Naive thymus-derived CD4-positive, alpha-beta T cell (primary cell): ENCODE measurements at regions of chr6 and their contacts with region 1.

Region 1: GRCh38 chr6:51511081-51511480 is 576.3 kb downstream of the PKHD1 start:
- DNase-seq: no peak
- ATAC-seq: no peak
- H3K4me3 ChIP-seq: no peak overlapping the region
- H3K4me3 Mint-ChIP-seq: no peak overlapping the region
- H3K27ac ChIP-seq: no peak overlapping the region
- H3K27ac Mint-ChIP-seq: no peak overlapping the region
- H3K4me1 ChIP-seq: no peaks in the 10 kb centered on the region
- H3K4me1 Mint-ChIP-seq: no peaks in the 10 kb centered on the region
- H3K27me3 ChIP-seq: no peaks in the 10 kb centered on the region
- H3K27me3 Mint-ChIP-seq: no peaks in the 10 kb centered on the region

Region 2: DNA sequence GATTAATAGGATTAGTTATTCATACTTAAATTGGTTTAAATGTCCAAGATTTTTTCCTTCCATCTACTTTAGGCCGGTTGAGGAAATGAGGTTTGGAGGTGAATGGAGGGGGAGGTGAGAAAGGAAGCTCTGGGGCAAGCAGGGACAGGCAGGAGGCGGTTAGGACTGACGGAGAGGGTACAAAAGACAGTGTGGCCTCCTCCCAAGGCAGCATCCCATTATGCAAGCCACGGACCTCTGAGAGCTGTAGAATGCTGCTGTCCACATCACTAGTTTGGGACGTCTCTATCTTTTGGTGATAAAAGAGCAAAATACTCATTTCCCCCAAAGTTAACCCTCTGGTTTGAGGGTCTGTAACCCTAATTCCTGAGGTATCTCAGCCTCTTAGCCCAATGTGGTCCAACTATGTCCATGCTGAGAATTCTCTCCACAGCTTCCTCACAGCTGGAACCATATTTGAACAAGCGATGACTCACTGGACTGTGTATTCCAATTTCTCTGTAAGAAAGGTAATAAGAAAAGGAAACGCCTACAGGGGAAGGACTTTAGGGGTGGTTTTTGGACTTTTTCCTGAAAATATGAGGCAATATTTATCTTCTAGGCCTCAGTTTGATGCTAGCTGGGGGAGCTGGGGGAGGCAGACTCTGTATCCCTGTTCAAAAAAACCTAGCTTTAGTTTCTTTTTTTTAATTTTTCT is 520.2 kb before region 1 on chr6:
- CTCF ChIA-PET with region 1: no interaction called
- POLR2A ChIA-PET with region 1: no interaction called
- intact Hi-C with region 1: no loop called
- DNase-seq: no peak
- ATAC-seq: no peak
- H3K4me3 ChIP-seq: no peak overlapping the region
- H3K4me3 Mint-ChIP-seq: no peak overlapping the region
- H3K27ac ChIP-seq: no peak overlapping the region
- H3K27ac Mint-ChIP-seq: no peak overlapping the region
- H3K4me1 ChIP-seq: no peaks in the 10 kb centered on the region
- H3K4me1 Mint-ChIP-seq: no peaks in the 10 kb centered on the region
- H3K27me3 ChIP-seq: no peaks in the 10 kb centered on the region
- H3K27me3 Mint-ChIP-seq: peaks cover 0 to 3% (median 0%) of the 10 kb centered on the region in 5 donors

Region 3: DNA sequence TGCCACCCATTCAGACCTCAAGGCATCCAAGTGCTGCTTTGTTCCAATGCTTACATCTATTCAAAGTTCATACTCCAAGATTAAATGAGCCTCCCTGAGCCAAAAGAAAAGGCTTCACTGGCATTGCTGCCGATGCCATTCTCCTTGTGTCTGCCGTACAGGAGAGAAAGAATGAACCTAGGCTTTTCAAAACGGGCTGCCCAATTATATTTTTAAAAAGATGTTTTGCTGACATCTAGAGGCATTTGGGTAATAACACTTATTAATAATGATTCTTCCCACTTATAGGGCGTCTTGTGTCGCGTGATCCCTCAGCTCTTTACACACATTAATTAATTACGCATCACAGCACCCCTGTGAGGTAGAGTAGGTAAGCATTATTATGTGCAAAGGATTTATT is 30.8 kb after region 1 on chr6:
- CTCF ChIA-PET with region 1: interaction called, 10 read pairs
- POLR2A ChIA-PET with region 1: no interaction called
- intact Hi-C with region 1: no loop called
- DNase-seq: no peak
- ATAC-seq: no peak
- H3K4me3 ChIP-seq: no peak overlapping the region
- H3K4me3 Mint-ChIP-seq: no peak overlapping the region
- H3K27ac ChIP-seq: no peak overlapping the region
- H3K27ac Mint-ChIP-seq: no peak overlapping the region
- H3K4me1 ChIP-seq: no peaks in the 10 kb centered on the region
- H3K4me1 Mint-ChIP-seq: no peaks in the 10 kb centered on the region
- H3K27me3 ChIP-seq: no peaks in the 10 kb centered on the region
- H3K27me3 Mint-ChIP-seq: peaks cover 0 to 8% (median 0%) of the 10 kb centered on the region in 5 donors

Region 4: GRCh38 chr6:52893803-52894649 is 1382.9 kb after region 1 on chr6:
- CTCF ChIA-PET with region 1: no interaction called
- POLR2A ChIA-PET with region 1: no interaction called
- intact Hi-C with region 1: no loop called
- DNase-seq: no peak
- ATAC-seq: no peak
- H3K4me3 ChIP-seq: no peak overlapping the region
- H3K4me3 Mint-ChIP-seq: no peak overlapping the region
- H3K27ac ChIP-seq: no peak overlapping the region
- H3K27ac Mint-ChIP-seq: no peak overlapping the region
- H3K4me1 ChIP-seq: no peaks in the 10 kb centered on the region
- H3K4me1 Mint-ChIP-seq: no peaks in the 10 kb centered on the region
- H3K27me3 ChIP-seq: no peaks in the 10 kb centered on the region
- H3K27me3 Mint-ChIP-seq: peaks cover 0 to 18% (median 4%) of the 10 kb centered on the region in 5 donors